ENCODE measurements at regions of chr15 and their contacts with region 1.

Region 1: DNA sequence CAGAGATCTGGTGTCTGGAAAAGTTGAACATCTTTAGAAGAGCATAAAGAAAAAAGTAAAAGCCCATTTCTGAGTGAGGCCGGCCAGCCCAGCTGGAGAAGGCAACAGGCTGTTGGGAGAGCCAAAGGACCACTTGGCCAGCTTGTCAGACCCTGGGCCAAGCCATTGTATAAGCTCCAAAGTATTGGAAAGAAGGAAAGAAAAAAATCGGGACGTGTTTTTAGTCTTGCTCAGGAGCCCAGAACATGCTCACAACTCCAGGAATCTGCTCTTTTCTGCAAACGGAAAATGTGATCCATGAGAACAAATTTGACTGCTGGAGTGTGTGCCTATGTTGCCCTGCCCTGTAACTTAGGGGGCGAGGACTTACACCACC is 10.4 kb upstream of the CLPX start:
- DNase-seq: no peak
- H3K4me3 ChIP-seq: no peak overlapping the region
- H3K27ac ChIP-seq: no peak overlapping the region
- H3K4me1 ChIP-seq: no peaks in the 10 kb centered on the region
- H3K27me3 ChIP-seq: no peaks in the 10 kb centered on the region
- CTCF ChIP-seq: no peak

Region 2: GRCh38 chr15:65146438-65146837 is 49.1 kb before region 1 on chr15:
- CTCF ChIA-PET with region 1: no interaction called
- POLR2A ChIA-PET with region 1: interaction called, 11 read pairs
- intact Hi-C with region 1: no loop called
- DNase-seq: no peak
- H3K4me3 ChIP-seq: no peak overlapping the region
- H3K27ac ChIP-seq: no peak overlapping the region
- H3K4me1 ChIP-seq: no peaks in the 10 kb centered on the region
- H3K27me3 ChIP-seq: no peaks in the 10 kb centered on the region
- CTCF ChIP-seq: no peak